ENCODE measurements at regions of chr1 and their contacts with region 1.

Region 1: DNA sequence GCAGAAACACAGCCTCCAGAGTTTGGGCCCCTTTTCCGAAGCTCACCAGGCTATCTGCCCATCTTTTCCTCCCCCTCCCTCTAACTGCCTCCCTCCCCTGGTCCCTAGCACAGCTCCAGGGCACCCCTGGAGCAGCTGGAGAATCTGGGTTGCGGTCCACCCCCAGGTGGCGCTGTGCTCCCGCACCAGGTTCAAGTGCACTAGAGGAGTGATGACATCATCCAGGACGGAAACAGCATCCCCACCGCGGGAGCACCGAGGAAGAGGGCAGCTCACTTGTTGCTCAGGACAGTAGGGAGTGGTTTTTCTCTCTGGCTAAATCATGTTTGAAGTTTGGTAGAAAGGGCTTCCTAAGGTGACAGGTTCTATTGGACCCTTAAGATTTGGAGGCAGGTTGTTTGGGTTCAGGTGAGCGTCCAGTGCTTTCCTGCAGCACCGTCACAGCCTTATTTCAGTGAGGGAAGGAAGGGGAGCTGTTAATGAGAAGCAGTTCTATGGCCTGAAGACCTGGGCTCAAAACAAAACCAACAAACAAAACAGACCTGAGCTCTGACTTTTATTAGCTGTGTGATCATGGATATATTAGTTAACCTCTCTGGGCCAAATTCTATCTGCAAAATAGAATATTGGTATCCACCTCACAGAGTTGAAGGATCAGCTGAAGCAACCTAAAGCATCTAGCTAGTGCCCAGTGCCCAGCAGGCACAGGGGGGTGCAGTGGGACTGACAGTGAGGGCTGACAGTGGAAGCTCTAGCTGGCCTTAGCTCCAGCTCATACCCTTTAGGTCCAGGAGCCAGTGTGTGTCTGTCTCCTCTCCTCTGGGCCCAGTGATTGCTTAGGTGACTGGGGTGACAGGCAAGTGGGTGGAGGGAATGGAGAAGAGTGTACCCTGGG is 7.5 kb downstream of the SHISA4 start:
- DNase-seq: peak; percentile 95
- H3K4me3 Mint-ChIP-seq: no peak overlapping the region
- H3K27ac Mint-ChIP-seq: no peak overlapping the region
- H3K4me1 Mint-ChIP-seq: peaks cover 5% of the 10 kb centered on the region
- H3K27me3 Mint-ChIP-seq: peaks cover 13% of the 10 kb centered on the region
- CTCF ChIP-seq: peak; percentile 99

Region 2: DNA sequence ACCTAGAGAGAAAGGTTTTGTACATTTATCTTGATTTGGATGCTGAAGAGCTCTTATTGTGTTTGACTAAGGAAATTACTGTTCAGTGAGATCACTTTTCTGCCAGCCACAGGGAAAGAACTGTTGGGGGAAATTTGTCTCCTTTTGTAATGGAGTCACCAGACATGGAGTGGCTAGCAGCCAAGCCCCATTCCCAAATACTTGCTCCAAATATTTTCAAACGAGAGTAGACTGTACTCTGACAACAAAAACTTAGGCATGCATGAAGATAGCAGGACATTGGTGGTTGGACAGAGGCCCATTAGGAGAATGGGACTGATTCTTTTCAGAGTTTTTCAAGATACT is 46.1 kb before region 1 on chr1:
- CTCF ChIA-PET with region 1: interaction called, 11 read pairs
- POLR2A ChIA-PET with region 1: interaction called, 3 read pairs
- intact Hi-C with region 1: no loop called
- DNase-seq: peak; percentile 51
- H3K4me3 Mint-ChIP-seq: no peak overlapping the region
- H3K27ac Mint-ChIP-seq: peak overlapping the region; percentile 58
- H3K4me1 Mint-ChIP-seq: peaks cover 41% of the 10 kb centered on the region
- H3K27me3 Mint-ChIP-seq: no peaks in the 10 kb centered on the region
- CTCF ChIP-seq: no peak

Region 3: DNA sequence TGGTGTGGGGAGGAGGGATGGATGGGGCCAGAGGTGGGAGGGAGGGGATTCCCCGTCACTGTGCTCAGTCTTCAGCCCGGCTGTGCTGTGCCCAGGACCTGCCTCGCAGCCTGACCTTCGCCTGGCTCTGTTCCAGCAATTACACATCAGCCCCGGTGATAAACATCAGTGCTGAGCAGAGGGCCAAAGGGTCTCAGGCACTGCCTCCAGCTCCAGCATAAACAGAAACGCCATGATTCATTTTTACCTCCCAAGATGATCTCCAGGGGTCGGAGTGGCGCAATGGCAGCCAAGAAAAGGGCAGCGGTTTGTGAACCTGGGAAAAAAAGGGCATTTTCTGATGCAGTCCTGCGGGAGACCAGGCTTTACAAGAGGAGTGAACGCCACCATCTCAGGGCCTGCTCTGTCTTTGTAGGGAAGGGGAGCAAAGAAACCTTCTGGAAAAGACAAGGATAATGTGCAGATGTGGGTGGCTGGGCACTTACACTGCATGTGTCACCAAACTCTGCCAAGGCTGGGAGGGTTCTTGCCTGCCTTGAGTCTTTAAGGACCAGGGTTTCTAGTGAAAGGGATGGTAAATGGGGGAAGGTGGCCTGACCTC is 20.6 kb after region 1 on chr1:
- CTCF ChIA-PET with region 1: interaction called, 83 read pairs
- POLR2A ChIA-PET with region 1: interaction called, 5 read pairs
- intact Hi-C with region 1: no loop called
- DNase-seq: peak; percentile 100
- H3K4me3 Mint-ChIP-seq: no peak overlapping the region
- H3K27ac Mint-ChIP-seq: no peak overlapping the region
- H3K4me1 Mint-ChIP-seq: peaks cover 34% of the 10 kb centered on the region
- H3K27me3 Mint-ChIP-seq: peaks cover 11% of the 10 kb centered on the region
- CTCF ChIP-seq: no peak

Region 4: GRCh38 chr1:201946224-201946908 is 50.2 kb after region 1 on chr1 and contains the start of gene LMOD1:
- CTCF ChIA-PET with region 1: interaction called, 882 read pairs
- POLR2A ChIA-PET with region 1: interaction called, 3 read pairs
- intact Hi-C with region 1: no loop called
- DNase-seq: peak; percentile 73
- H3K4me3 Mint-ChIP-seq: peak within 1 kb of the TSS; percentile 5
- H3K27ac Mint-ChIP-seq: no peak within 1 kb of the TSS
- H3K4me1 Mint-ChIP-seq: peaks cover 10% of the 10 kb centered on the region
- H3K27me3 Mint-ChIP-seq: peaks cover 35% of the 10 kb centered on the region
- CTCF ChIP-seq: no peak
- total RNA-seq, gene LMOD1: not detected in 2 replicates

Region 5: GRCh38 chr1:201982623-201983379 is 86.6 kb after region 1 on chr1 and contains the start of gene RNPEP:
- CTCF ChIA-PET with region 1: interaction called, 33 read pairs
- POLR2A ChIA-PET with region 1: interaction called, 14 read pairs
- intact Hi-C with region 1: no loop called
- DNase-seq: peak; percentile 94
- H3K4me3 Mint-ChIP-seq: peak within 1 kb of the TSS; percentile 90
- H3K27ac Mint-ChIP-seq: peak within 1 kb of the TSS; percentile 66
- H3K4me1 Mint-ChIP-seq: peaks cover 24% of the 10 kb centered on the region
- H3K27me3 Mint-ChIP-seq: no peaks in the 10 kb centered on the region
- CTCF ChIP-seq: peak; percentile 30
- total RNA-seq, gene RNPEP: 147 and 155 TPM in 2 replicates

Region 6: DNA sequence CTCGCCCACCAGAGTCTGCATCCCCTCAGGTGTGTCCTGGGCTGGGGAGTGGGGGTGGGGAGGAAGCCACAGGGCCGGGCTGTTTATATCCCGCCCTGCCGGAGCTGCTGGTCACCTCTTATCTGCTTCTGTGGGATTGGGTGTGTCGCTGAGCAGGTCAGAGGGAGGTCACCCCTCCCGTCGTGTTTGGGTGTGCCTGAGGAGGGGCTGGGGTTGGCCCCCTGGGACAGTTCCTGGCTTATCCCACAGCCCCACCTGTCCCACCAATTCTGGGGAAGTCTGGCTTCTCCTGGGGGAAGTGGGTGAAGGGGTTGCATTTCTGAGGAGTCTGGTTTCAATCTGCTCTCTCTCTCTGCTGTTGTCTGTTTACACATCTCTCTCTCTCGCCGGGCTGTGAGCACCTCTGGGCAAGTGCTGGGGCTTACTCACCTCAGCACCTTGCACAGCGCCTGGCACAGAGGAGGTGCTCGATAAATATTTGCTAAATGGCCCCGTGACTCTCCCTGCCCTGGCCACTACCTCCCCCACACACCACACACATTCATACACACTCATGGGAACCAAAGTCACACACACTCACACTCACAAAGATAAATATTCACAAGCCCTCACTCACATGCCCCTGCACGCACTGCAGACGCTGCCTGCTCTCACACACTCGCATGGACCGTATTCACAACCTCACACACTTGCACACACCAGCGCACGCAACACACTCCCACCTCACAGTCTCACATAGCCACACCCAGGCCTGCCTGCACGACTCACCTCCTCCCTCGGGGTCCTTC is 122.5 kb after region 1 on chr1:
- CTCF ChIA-PET with region 1: interaction called, 13 read pairs
- POLR2A ChIA-PET with region 1: no interaction called
- intact Hi-C with region 1: no loop called
- DNase-seq: peak; percentile 94
- H3K4me3 Mint-ChIP-seq: peak overlapping the region; percentile 37
- H3K27ac Mint-ChIP-seq: peak overlapping the region; percentile 39
- H3K4me1 Mint-ChIP-seq: peaks cover 41% of the 10 kb centered on the region
- H3K27me3 Mint-ChIP-seq: peaks cover 13% of the 10 kb centered on the region
- CTCF ChIP-seq: no peak

Region 7: GRCh38 chr1:202135221-202135721 is 239.1 kb after region 1 on chr1:
- CTCF ChIA-PET with region 1: interaction called, 18 read pairs
- POLR2A ChIA-PET with region 1: no interaction called
- intact Hi-C with region 1: no loop called
- DNase-seq: peak; percentile 86
- H3K4me3 Mint-ChIP-seq: no peak overlapping the region
- H3K27ac Mint-ChIP-seq: no peak overlapping the region
- H3K4me1 Mint-ChIP-seq: peaks cover 8% of the 10 kb centered on the region
- H3K27me3 Mint-ChIP-seq: no peaks in the 10 kb centered on the region
- CTCF ChIP-seq: peak; percentile 98

Measured in MCF 10A (cell line).